HCT116 (cell line): ENCODE measurements at regions of chr19 and their contacts with region 1.

Region 1: DNA sequence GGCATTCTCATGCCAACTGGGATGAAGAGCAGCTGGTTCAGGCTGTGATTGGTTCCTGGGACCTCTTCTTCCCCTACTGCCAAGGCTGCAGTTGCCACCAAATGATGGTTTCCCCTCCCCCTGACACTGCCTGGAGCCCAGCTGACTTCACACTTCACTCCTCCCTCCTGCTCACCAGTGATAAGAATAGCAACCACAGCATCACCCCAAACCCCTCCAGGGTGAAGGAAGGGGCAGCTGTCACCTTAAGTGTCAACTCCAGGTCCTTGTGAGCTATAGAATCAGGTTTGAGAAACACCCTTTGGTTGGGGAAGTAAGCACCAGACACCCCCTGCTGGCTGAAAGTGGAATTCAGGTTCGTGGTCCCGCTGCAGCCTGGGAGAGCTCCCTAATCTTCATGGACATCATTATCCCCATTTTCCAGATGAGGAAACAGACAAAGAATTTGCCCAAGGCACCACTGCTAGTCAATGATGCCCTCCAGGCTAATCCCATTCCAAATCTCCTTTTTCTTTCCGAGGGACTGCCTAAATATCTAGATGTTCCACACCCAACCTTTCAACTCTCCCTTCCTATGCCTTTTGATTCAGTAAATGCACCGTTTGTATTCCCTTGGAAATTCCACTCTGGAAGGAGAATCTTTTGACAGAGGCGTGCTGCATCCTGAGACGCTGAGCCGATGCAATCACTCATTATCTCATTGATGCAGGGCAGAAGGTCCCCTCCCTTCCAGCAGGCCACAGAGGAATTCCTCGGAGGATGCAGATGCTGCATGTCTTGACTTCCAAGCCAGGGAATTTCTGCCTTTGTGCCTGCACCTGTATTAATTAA is 50.6 kb upstream of the UQCRFS1 start:
- DNase-seq: no peak
- ATAC-seq: peak; percentile 70
- H3K4me3 ChIP-seq: no peak overlapping the region
- H3K27ac ChIP-seq: no peak overlapping the region
- H3K4me1 ChIP-seq: no peaks in the 10 kb centered on the region
- H3K27me3 ChIP-seq: no peaks in the 10 kb centered on the region
- CTCF ChIP-seq: peak; percentile 5 to 82 (median 81); a peak in 4 of 6 replicates
- POLR2A ChIP-seq: no peak
- RAD21 ChIP-seq: peak; percentile 45; the same call in 1 of the 2 replicates

Region 2: GRCh38 chr19:28746478-28746877 is 517.0 kb before region 1 on chr19:
- CTCF ChIA-PET with region 1: no interaction called
- POLR2A ChIA-PET with region 1: no interaction called
- RAD21 ChIA-PET with region 1: no interaction called
- intact Hi-C with region 1: loop called (anchors 10 kb)
- DNase-seq: no peak
- ATAC-seq: no peak
- H3K4me3 ChIP-seq: no peak overlapping the region
- H3K27ac ChIP-seq: no peak overlapping the region
- H3K4me1 ChIP-seq: no peaks in the 10 kb centered on the region
- H3K27me3 ChIP-seq: no peaks in the 10 kb centered on the region
- CTCF ChIP-seq: no peak
- POLR2A ChIP-seq: no peak
- RAD21 ChIP-seq: no peak

Region 3: DNA sequence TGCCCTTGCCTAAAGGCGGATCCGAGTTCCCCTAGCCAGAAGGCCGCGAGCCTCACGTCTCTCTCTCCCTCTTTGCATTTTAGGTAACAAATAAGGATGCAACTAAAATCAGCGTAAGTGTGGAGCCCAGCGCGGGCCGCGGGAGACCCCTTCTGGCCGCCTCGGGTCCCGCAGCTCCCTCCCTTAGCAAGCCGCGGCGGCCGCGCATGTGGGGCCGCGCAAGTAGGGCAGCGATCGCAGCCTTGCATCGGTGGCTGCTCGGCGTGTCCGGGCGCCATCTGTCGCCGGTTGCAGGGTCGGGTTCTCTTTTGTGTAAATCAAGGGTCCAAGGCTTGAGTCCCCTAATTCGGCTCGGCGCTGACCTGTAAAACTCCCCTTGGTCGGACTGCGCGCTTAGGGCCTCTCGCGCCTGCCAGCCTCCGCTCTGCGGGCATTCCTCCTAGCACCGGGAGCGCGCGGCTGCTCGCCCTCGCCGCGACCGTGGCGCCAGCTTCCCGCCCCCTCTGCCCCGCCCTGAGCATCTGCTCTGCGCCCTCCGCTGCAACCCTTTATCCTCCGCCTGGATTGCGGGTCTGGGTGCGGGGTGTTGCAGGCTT is 264.9 kb after region 1 on chr19:
- CTCF ChIA-PET with region 1: interaction called, 11 read pairs
- POLR2A ChIA-PET with region 1: no interaction called
- RAD21 ChIA-PET with region 1: no interaction called
- intact Hi-C with region 1: no loop called
- DNase-seq: peak; percentile 31
- ATAC-seq: peak; percentile 97
- H3K4me3 ChIP-seq: no peak overlapping the region
- H3K27ac ChIP-seq: no peak overlapping the region
- H3K4me1 ChIP-seq: peaks cover 0 to 8% of the 10 kb centered on the region in 2 experiments; a peak in 1 of 4 replicates
- H3K27me3 ChIP-seq: peaks cover 6% of the 10 kb centered on the region; the same call in 1 of the 2 replicates
- CTCF ChIP-seq: peak; percentile 65 to 89 (median 89)
- POLR2A ChIP-seq: no peak
- RAD21 ChIP-seq: peak; percentile 76